MCF 10A (cell line): ENCODE measurements at regions of chr3 and their contacts with region 1.

Region 1: DNA sequence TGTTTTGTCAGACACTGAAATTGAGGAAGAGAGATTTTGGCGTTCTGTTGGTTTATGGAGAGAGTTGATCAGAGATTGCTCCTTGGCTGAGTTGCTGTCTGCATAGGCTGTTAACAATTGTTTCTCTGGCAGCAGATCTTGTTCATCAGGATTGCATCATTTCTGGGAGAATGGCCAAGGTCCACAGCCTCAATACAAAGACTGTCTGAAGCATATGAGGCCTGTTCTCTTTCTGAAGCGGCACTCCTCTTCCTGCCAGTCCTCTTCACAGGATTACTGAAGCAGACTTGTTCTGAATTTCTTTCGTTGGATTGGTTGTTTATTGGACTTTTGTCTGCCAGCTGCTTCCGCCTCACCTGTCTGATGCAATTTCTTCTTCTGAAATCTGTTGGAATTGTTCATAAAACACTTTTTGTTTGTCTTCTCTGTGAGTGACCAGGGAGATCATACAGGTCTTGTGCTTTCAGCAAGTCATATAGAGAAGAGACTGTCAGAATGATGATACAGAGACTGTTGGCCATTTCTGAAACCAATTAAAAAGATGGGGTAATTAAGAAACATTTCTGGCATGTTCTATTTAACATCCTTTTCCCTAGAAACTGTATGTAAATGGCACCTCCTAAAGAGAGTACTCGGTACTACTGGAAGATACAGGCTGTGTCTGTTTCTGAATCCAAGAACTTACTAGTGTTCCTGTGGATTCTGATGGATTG is 25.5 kb downstream of the SETD5 start:
- DNase-seq: peak; percentile 98
- H3K4me3 Mint-ChIP-seq: peak overlapping the region; percentile 59
- H3K27ac Mint-ChIP-seq: peak overlapping the region; percentile 82
- H3K4me1 Mint-ChIP-seq: peaks cover 36% of the 10 kb centered on the region
- H3K27me3 Mint-ChIP-seq: no peaks in the 10 kb centered on the region
- CTCF ChIP-seq: peak; percentile 78

Region 2: GRCh38 chr3:9352917-9353752 is 69.7 kb before region 1 on chr3:
- CTCF ChIA-PET with region 1: interaction called, 9 read pairs
- POLR2A ChIA-PET with region 1: interaction called, 5 read pairs
- intact Hi-C with region 1: loop called (anchors 1 kb)
- DNase-seq: peak; percentile 67
- H3K4me3 Mint-ChIP-seq: no peak overlapping the region
- H3K27ac Mint-ChIP-seq: no peak overlapping the region
- H3K4me1 Mint-ChIP-seq: peaks cover 24% of the 10 kb centered on the region
- H3K27me3 Mint-ChIP-seq: no peaks in the 10 kb centered on the region
- CTCF ChIP-seq: peak; percentile 90

Region 3: DNA sequence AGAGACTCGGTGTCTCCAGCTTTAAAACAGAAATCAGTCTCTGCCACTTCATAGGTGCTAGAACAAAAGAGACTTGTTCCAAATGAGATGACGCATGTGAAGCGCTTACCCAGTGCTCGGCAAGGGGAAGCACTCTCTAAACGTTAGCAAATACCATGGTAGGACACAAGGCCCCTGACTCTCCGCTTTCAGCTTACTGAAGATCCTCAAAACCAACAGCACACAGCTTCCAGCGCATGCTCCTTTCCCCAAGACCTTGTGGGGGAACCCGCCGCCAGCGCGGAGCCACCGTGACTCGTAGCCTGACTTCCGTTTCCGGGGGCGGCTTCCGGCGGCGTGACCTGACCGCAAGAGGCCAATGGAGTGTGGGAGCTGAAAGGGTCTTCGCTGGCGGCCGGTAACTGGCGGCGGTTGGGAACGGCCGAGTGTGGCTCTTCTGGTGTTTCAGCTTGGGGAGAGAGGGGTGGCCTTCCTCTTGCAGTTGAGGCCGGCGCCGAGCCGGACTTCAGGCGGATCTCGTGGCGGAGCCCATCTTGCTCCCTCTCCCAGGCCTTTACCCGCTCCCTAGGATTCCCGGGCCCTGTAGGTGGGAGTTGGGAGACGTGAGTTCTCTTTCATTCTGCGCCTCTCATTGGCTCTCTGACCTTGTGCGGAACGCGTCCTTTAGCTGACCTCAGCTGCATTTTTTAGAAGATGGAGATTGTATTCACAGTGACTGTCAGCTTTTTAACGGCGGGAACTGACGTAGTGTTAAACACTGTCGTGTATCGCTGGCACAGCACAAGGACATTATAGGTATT is 59.9 kb before region 1 on chr3 and contains the start of gene THUMPD3:
- CTCF ChIA-PET with region 1: interaction called, 6 read pairs
- POLR2A ChIA-PET with region 1: interaction called, 35 read pairs
- intact Hi-C with region 1: loop called (anchors 2 kb)
- DNase-seq: peak; percentile 89
- H3K4me3 Mint-ChIP-seq: peak within 1 kb of the TSS; percentile 97
- H3K27ac Mint-ChIP-seq: peak within 1 kb of the TSS; percentile 99
- H3K4me1 Mint-ChIP-seq: peaks cover 5% of the 10 kb centered on the region
- H3K27me3 Mint-ChIP-seq: no peaks in the 10 kb centered on the region
- CTCF ChIP-seq: no peak
- total RNA-seq, gene THUMPD3: 53.4 and 63.0 TPM in 2 replicates

Region 4: DNA sequence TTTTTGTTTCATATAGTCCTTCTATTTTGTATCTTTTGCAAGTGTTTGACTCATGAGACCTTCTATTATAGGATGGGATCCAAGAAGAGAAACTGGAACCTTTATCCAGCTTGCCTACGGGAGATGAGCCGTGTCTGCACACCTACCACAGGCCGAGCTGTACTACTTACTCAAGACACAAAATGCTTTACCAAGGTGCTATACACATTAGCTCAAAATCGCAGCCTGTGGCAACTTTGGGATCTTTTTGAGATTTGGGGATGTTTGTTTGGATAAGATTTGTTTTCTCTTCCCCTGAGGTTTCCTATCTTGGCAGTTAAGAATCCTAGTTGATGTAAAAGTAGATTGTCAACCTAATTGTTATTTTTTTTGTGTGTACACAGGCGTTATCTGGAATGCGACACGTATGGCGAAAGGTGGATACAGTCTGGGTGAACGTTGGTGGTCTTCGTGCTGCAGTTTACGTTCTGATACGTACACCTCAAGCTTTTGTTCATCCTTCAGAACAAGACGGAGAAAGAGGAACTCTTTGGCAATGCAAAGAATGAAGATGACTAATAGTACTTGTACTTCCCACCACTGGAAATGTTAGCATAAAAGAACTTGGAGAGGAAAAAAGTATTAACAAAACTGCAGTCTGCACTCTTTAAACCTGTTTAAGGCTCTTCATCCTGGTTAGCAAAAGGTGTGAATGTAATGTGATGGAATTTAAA is 38.6 kb before region 1 on chr3:
- CTCF ChIA-PET with region 1: no interaction called
- POLR2A ChIA-PET with region 1: interaction called, 452 read pairs
- intact Hi-C with region 1: loop called (anchors 5 kb)
- DNase-seq: no peak
- H3K4me3 Mint-ChIP-seq: no peak overlapping the region
- H3K27ac Mint-ChIP-seq: peak overlapping the region; percentile 73
- H3K4me1 Mint-ChIP-seq: no peaks in the 10 kb centered on the region
- H3K27me3 Mint-ChIP-seq: no peaks in the 10 kb centered on the region
- CTCF ChIP-seq: no peak

Region 5: DNA sequence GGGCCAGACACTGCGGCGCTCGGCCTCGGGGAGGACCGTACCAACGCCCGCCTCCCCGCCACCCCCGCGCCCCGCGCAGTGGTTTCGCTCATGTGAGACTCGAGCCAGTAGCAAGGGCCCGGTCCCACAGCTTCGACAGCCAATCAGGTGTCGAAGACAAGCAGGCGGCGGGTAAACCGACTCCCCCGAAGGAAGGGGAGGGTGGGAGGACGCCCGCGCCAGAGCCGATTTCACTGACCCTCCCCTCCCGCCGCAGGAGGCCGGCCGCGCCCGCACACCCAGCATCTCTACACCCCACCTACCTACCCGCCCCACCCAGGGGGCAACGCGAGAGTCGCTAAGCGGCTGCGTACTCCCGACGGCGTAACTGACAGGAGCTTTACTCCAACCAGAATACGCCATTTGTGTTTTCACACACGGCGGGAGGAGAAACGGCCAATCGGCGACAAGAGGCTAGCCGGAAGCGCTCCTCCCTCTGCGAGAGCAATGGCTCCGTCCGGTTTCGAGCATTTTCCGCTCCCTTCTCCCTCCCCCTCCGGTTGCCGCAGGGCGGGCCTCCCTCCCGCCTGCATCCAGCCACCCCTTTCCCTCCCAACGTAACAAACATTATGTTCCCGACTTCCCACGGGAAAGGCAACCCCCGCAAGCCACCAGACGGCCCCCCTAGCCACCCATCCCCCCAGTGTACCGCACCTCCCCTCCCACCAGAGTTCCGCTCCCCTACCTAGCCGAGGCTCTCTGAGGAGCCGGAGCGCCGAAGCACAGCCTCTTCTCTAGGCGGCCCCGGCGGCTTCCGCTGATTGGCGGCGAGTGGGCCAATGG is 26.0 kb before region 1 on chr3:
- CTCF ChIA-PET with region 1: interaction called, 42 read pairs
- POLR2A ChIA-PET with region 1: interaction called, 452 read pairs
- intact Hi-C with region 1: loop called (anchors 1 kb)
- DNase-seq: peak; percentile 99
- H3K4me3 Mint-ChIP-seq: peak overlapping the region; percentile 81
- H3K27ac Mint-ChIP-seq: peak overlapping the region; percentile 92
- H3K4me1 Mint-ChIP-seq: peaks cover 40% of the 10 kb centered on the region
- H3K27me3 Mint-ChIP-seq: no peaks in the 10 kb centered on the region
- CTCF ChIP-seq: no peak

Region 6: GRCh38 chr3:9402410-9403228 is 20.2 kb before region 1 on chr3:
- CTCF ChIA-PET with region 1: interaction called, 5 read pairs
- POLR2A ChIA-PET with region 1: interaction called, 452 read pairs
- intact Hi-C with region 1: no loop called
- DNase-seq: peak; percentile 48
- H3K4me3 Mint-ChIP-seq: peak overlapping the region; percentile 68
- H3K27ac Mint-ChIP-seq: peak overlapping the region; percentile 77
- H3K4me1 Mint-ChIP-seq: peaks cover 46% of the 10 kb centered on the region
- H3K27me3 Mint-ChIP-seq: no peaks in the 10 kb centered on the region
- CTCF ChIP-seq: no peak

Region 7: DNA sequence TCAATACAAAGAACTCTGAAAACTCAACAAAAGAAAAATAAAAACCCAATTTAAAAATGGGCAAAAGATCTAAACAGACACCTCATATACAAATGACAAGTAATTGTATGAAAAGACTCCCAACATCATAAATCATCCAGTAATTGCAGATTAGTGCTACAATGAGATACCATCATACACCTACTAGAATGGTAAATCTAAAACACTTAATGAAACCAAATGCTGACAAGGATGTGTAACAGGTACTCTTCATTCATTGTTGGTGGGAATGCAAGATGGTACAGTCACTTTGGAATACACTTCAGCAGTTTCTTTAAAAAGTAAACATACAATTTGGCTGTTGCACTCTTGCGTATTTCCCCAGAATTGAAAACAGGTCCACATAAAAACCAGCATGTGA is 62.4 kb after region 1 on chr3:
- CTCF ChIA-PET with region 1: no interaction called
- POLR2A ChIA-PET with region 1: no interaction called
- intact Hi-C with region 1: no loop called
- DNase-seq: no peak
- H3K4me3 Mint-ChIP-seq: no peak overlapping the region
- H3K27ac Mint-ChIP-seq: no peak overlapping the region
- H3K4me1 Mint-ChIP-seq: no peaks in the 10 kb centered on the region
- H3K27me3 Mint-ChIP-seq: no peaks in the 10 kb centered on the region
- CTCF ChIP-seq: no peak

Region 8: GRCh38 chr3:9525078-9525477 is 102.2 kb after region 1 on chr3:
- CTCF ChIA-PET with region 1: no interaction called
- POLR2A ChIA-PET with region 1: no interaction called
- intact Hi-C with region 1: no loop called
- DNase-seq: no peak
- H3K4me3 Mint-ChIP-seq: no peak overlapping the region
- H3K27ac Mint-ChIP-seq: no peak overlapping the region
- H3K4me1 Mint-ChIP-seq: no peaks in the 10 kb centered on the region
- H3K27me3 Mint-ChIP-seq: peaks cover 80% of the 10 kb centered on the region
- CTCF ChIP-seq: no peak

Region 9: DNA sequence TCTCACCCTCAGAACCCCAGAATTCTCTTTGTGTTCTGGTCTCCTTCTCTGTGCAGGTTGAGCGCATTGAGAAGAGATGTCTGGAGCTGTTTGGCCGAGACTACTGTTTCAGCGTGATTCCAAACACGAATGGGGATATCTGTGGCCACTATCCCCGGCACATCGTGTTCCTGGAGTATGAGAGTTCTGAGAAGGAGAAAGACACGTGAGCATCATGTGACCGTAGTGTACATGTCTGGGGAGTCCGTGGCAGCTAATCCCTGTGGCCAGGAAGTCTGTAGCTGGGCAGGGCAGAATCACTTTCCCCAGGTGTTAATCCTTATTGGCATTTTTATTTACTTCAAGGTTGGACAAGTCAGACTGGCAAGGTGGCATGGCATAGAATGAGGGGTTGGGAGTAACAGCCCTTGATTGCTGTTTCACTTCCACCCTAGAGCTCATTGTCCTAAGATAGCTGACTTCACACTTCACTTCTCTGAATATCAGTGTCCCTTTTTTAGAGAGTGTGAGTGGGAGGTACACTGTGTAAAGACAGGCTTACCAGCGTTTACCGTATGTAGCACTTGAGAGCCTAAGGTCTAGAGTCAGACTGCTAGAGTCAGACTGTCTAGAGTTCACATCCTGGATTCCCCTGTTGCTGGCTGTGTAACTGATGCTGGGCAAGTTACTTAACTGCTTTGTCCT is 230.8 kb after region 1 on chr3:
- CTCF ChIA-PET with region 1: no interaction called
- POLR2A ChIA-PET with region 1: no interaction called
- intact Hi-C with region 1: no loop called
- DNase-seq: no peak
- H3K4me3 Mint-ChIP-seq: no peak overlapping the region
- H3K27ac Mint-ChIP-seq: no peak overlapping the region
- H3K4me1 Mint-ChIP-seq: peaks cover 4% of the 10 kb centered on the region
- H3K27me3 Mint-ChIP-seq: no peaks in the 10 kb centered on the region
- CTCF ChIP-seq: no peak